HepG2 (cell line): ENCODE measurements at regions of chr6 and their contacts with region 1.

Region 1: DNA sequence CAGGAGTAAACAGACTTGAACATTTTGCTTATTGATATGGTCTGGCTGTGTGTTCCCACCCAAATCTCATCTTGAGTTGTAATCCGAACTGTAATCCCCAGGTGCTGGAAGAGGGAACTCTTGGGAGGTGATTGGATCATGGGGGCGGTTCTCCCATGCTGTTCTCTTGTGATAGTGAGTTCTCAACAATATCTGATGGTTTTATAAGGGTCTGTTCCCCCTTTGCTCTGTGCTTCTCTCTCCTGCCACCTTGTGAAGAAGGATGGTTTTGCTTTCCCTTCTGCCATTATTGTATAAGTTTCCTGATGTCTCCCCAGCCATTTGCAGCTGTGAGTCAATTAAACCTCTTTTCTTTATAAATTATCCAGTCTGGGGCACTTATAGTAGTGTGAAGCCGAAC is 40.0 kb downstream of the MYLIP start:
- DNase-seq: peak; percentile 32
- ATAC-seq: peak; percentile 68
- H3K4me3 ChIP-seq: no peak overlapping the region
- H3K27ac ChIP-seq: no peak overlapping the region
- H3K4me1 ChIP-seq: no peaks in the 10 kb centered on the region
- H3K27me3 ChIP-seq: peaks cover 0 to 12% of the 10 kb centered on the region in 2 experiments; a peak in 2 of 5 replicates
- CTCF ChIP-seq: peak; percentile 54
- EP300 ChIP-seq: no peak
- POLR2A ChIP-seq: no peak
- RAD21 ChIP-seq: no peak

Region 2: GRCh38 chr6:15943423-15943822 is 225.4 kb before region 1 on chr6:
- CTCF ChIA-PET with region 1: no interaction called
- POLR2A ChIA-PET with region 1: no interaction called
- in situ Hi-C with region 1: no loop called
- intact Hi-C with region 1: loop called (anchors 1 kb)
- DNase-seq: no peak
- ATAC-seq: no peak
- H3K4me3 ChIP-seq: no peak overlapping the region
- H3K27ac ChIP-seq: no peak overlapping the region
- H3K4me1 ChIP-seq: no peaks in the 10 kb centered on the region
- H3K27me3 ChIP-seq: peaks cover 3 to 49% of the 10 kb centered on the region in 2 experiments; a peak in 4 of 5 replicates
- CTCF ChIP-seq: no peak
- EP300 ChIP-seq: no peak
- POLR2A ChIP-seq: no peak
- RAD21 ChIP-seq: no peak